Calu3 (cell line): ENCODE measurements at regions of chr9 and their contacts with region 1.

Region 1: GRCh38 chr9:115524453-115525059 is 406.6 kb upstream of the TNC start:
- DNase-seq: peak; percentile 36
- H3K4me3 Mint-ChIP-seq: no peak overlapping the region
- H3K27ac Mint-ChIP-seq: no peak overlapping the region
- H3K4me1 Mint-ChIP-seq: no peaks in the 10 kb centered on the region
- H3K27me3 Mint-ChIP-seq: peaks cover 12% of the 10 kb centered on the region
- CTCF ChIP-seq: peak; percentile 25

Region 2: DNA sequence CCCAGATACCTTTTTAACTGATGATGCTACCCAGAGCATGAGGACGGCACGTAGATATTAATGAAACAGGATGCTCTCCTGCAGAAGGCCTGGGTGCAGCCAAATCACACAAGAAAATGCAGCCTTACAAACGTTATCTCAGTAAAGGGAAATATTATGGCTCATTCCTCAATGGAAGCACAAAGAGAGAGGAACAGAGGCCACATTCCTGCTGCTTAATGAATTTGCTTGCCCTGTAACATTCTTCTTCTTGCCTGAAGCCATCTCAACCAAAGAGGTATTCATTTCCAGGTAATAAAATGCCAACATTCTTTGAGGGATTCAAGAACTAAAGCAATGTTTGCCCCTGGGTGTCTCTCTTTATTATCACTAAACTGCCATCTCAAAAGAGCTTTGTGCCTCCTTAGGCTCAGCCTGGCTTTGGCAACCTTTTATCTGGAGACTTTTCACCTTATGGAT is 499.6 kb before region 1 on chr9:
- CTCF ChIA-PET with region 1: no interaction called
- intact Hi-C with region 1: loop called (anchors 5 kb)
- DNase-seq: no peak
- H3K4me3 Mint-ChIP-seq: no peak overlapping the region
- H3K27ac Mint-ChIP-seq: no peak overlapping the region
- H3K4me1 Mint-ChIP-seq: no peaks in the 10 kb centered on the region
- H3K27me3 Mint-ChIP-seq: peaks cover 22% of the 10 kb centered on the region
- CTCF ChIP-seq: no peak

Region 3: DNA sequence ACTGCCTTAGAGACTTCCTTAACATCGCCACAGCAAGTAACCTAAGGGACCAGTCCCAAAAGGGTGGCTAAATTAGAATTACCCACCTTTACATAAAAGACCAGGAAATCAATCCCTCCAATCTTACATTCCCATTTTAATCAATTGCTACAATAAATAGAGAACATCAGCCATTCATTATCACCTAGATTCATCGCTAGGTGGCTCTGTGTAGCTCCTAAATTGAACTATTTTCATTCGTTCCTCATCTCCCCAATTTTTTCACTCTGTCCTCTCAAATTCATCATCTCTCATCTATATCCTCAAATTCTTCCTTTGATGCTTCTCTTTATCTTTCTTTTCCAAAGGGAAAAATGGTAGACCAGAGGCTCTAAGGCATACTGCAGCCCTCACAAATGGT is 298.4 kb before region 1 on chr9:
- CTCF ChIA-PET with region 1: no interaction called
- intact Hi-C with region 1: loop called (anchors 1 kb)
- DNase-seq: peak; percentile 6
- H3K4me3 Mint-ChIP-seq: no peak overlapping the region
- H3K27ac Mint-ChIP-seq: no peak overlapping the region
- H3K4me1 Mint-ChIP-seq: peaks cover 8% of the 10 kb centered on the region
- H3K27me3 Mint-ChIP-seq: no peaks in the 10 kb centered on the region
- CTCF ChIP-seq: no peak

Region 4: DNA sequence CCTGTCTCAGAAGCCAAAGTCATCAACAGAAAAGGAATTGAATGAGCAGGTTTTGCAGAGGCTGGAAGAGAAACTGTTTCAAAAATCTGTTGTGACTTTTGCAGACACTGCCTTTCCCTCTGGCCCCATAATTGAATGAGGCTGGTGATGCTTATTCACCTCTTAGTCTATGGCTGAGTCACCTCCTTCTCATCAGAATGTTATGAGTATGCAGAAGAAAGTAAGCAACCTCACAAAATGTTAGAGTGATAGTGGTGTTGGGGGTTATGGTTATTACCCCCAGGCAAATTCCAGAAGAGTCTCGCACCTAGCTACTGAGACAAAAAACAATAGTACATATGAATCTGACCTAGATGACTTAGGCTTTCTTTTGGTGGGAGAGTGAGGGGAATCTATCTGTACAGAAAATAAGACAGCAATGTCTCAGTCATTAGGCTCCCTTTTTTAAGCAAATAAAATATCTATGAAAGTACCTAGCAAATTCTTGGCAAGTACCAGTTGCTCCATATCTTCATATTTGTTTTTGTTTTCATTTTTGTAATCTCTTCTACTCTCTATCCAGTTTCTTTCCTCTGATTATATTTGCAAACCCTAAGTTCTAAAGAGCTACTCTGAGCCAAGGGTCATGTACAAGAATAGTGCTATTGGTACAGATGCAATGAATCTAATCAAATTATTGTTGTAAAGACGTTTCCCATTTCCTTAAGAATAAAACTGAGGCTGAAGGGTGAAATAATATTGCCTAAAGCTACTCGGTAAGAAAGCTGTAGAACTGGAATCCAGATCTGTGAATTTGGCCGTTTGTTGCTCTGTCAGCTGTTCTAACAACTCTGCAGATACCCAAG is 91.5 kb after region 1 on chr9:
- CTCF ChIA-PET with region 1: no interaction called
- intact Hi-C with region 1: no loop called
- DNase-seq: peak; percentile 1
- H3K4me3 Mint-ChIP-seq: no peak overlapping the region
- H3K27ac Mint-ChIP-seq: no peak overlapping the region
- H3K4me1 Mint-ChIP-seq: no peaks in the 10 kb centered on the region
- H3K27me3 Mint-ChIP-seq: no peaks in the 10 kb centered on the region
- CTCF ChIP-seq: no peak